GM13976 (cell line): ENCODE measurements at regions of chr11 and their contacts with region 1.

Region 1: GRCh38 chr11:9160166-9160565 is 68.8 kb upstream of the SCUBE2 start:
- DNase-seq: no peak
- CTCF ChIP-seq: no peak

Region 2: GRCh38 chr11:9396752-9397151 is 236.6 kb after region 1 on chr11:
- in situ Hi-C with region 1: no loop called
- DNase-seq: peak; percentile 63
- CTCF ChIP-seq: no peak

Region 3: GRCh38 chr11:9493492-9493891 is 333.3 kb after region 1 on chr11:
- in situ Hi-C with region 1: loop called (anchors 10 kb)
- DNase-seq: no peak
- CTCF ChIP-seq: no peak

Region 4: GRCh38 chr11:9601037-9601875 is 441.1 kb after region 1 on chr11:
- in situ Hi-C with region 1: no loop called
- DNase-seq: peak; percentile 73
- CTCF ChIP-seq: no peak

Region 5: GRCh38 chr11:9639985-9640384 is 479.8 kb after region 1 on chr11:
- in situ Hi-C with region 1: no loop called
- DNase-seq: no peak
- CTCF ChIP-seq: no peak